HCT116 (cell line): ENCODE measurements at regions of chr17 and their contacts with region 1.

Region 1: DNA sequence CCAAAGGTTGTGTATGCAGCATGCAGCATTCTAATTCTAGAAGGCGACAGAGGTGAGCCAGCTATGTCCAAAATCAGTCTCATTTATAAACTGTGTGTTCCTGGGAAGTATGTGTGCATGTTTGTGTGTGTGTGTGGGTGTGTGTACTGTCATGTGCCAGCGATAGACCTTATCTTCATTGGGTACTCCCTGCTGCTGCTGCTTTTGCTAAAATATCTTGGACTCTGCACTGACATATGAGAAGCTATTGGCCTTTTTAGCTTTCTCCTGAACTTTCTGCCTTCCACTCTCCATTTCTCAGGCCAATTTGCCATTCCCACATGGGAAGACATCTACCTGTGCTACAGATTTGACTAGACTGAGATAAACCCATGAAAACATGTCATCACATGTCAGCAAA is 2.0 kb upstream of the LPO start:
- DNase-seq: no peak
- ATAC-seq: no peak
- H3K4me3 ChIP-seq: no peak overlapping the region
- H3K27ac ChIP-seq: no peak overlapping the region
- H3K4me1 ChIP-seq: peaks cover 0 to 6% of the 10 kb centered on the region in 2 experiments; a peak in 1 of 4 replicates
- H3K27me3 ChIP-seq: peaks cover 74% of the 10 kb centered on the region
- CTCF ChIP-seq: no peak
- POLR2A ChIP-seq: no peak
- RAD21 ChIP-seq: no peak

Region 2: DNA sequence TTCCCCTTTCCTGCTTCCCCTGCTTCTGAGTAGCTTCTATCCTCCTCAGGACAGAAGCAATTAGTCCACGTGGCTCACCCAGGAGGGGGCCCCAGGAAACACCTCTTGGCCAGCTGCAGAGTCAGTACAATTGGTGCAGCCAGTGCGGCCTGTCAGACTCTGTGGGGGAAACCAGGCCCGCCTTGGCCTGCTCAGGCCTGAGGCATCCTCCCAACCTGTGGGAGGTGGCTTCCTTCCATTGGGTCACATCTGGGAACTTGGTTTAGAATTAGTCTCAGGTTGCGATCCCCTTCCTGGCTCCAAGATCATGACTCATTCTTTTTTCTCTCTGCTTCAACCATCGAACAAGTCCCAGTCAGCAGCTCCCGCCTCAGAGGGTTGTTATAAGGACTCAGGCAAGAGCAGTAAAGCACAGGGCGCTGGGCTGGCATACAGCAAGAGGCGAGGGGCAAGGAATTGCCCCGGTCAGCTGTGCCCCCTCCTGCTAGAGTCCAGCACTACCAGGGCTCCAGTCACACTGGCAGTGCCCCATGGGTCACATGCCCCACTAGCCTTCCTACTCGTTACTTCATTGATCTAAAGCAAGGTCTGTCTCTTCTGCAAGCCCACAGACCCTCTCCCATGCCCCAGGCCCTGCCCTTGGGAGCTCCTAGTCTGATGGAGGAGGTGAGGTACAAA is 51.9 kb before region 1 on chr17:
- CTCF ChIA-PET with region 1: no interaction called
- POLR2A ChIA-PET with region 1: no interaction called
- RAD21 ChIA-PET with region 1: no interaction called
- intact Hi-C with region 1: no loop called
- DNase-seq: peak; percentile 55
- ATAC-seq: peak; percentile 91
- H3K4me3 ChIP-seq: no peak overlapping the region
- H3K27ac ChIP-seq: peak overlapping the region; percentile 2; the same call in 1 of the 2 replicates
- H3K4me1 ChIP-seq: peaks cover 9 to 19% of the 10 kb centered on the region in 2 experiments
- H3K27me3 ChIP-seq: 0 out of 2 replicates have a peak, but pooled peaks cover 7% of the 10 kb centered on the region
- CTCF ChIP-seq: no peak
- POLR2A ChIP-seq: no peak
- RAD21 ChIP-seq: no peak

Region 3: GRCh38 chr17:58249270-58250133 is 13.1 kb after region 1 on chr17:
- CTCF ChIA-PET with region 1: interaction called, 12 read pairs
- POLR2A ChIA-PET with region 1: interaction called, 3 read pairs
- RAD21 ChIA-PET with region 1: no interaction called
- intact Hi-C with region 1: no loop called
- DNase-seq: peak; percentile 35
- ATAC-seq: peak; percentile 94
- H3K4me3 ChIP-seq: no peak overlapping the region
- H3K27ac ChIP-seq: no peak overlapping the region
- H3K4me1 ChIP-seq: peaks cover 0 to 6% of the 10 kb centered on the region in 2 experiments; a peak in 1 of 4 replicates
- H3K27me3 ChIP-seq: no peaks in the 10 kb centered on the region; the same call in 1 of the 2 replicates
- CTCF ChIP-seq: peak; percentile 68 to 96 (median 92); a peak in 5 of 6 replicates
- POLR2A ChIP-seq: no peak
- RAD21 ChIP-seq: peak; percentile 71